Endothelial cell of umbilical vein (primary cell): ENCODE measurements at regions of chr12 and their contacts with region 1.

Region 1: GRCh38 chr12:116150001-116150400 is 127.5 kb downstream of the MED13L start:
- DNase-seq: peak; percentile 56
- H3K4me3 ChIP-seq: no peak overlapping the region
- H3K27ac ChIP-seq: no peak overlapping the region
- H3K4me1 ChIP-seq: peaks cover 21% of the 10 kb centered on the region
- H3K27me3 ChIP-seq: no peaks in the 10 kb centered on the region
- CTCF ChIP-seq: no peak
- POLR2A ChIP-seq: no peak

Region 2: GRCh38 chr12:115946867-115947696 is 202.9 kb before region 1 on chr12:
- CTCF ChIA-PET with region 1: no interaction called
- POLR2A ChIA-PET with region 1: no interaction called
- dilution Hi-C with region 1: no loop called
- intact Hi-C with region 1: no loop called
- DNase-seq: no peak
- H3K4me3 ChIP-seq: no peak overlapping the region
- H3K27ac ChIP-seq: no peak overlapping the region
- H3K4me1 ChIP-seq: no peaks in the 10 kb centered on the region
- H3K27me3 ChIP-seq: no peaks in the 10 kb centered on the region
- CTCF ChIP-seq: peak; percentile 31 to 39
- POLR2A ChIP-seq: no peak

Region 3: GRCh38 chr12:116101991-116102390 is 48.0 kb before region 1 on chr12:
- CTCF ChIA-PET with region 1: no interaction called
- POLR2A ChIA-PET with region 1: no interaction called
- dilution Hi-C with region 1: no loop called
- intact Hi-C with region 1: no loop called
- DNase-seq: no peak
- H3K4me3 ChIP-seq: no peak overlapping the region
- H3K27ac ChIP-seq: no peak overlapping the region
- H3K4me1 ChIP-seq: peaks cover 3% of the 10 kb centered on the region
- H3K27me3 ChIP-seq: no peaks in the 10 kb centered on the region
- CTCF ChIP-seq: no peak
- POLR2A ChIP-seq: no peak

Region 4: GRCh38 chr12:116161588-116161987 is 11.6 kb after region 1 on chr12:
- CTCF ChIA-PET with region 1: interaction called, 10 read pairs
- POLR2A ChIA-PET with region 1: interaction called, 6 read pairs
- dilution Hi-C with region 1: no loop called
- intact Hi-C with region 1: loop called (anchors 2 kb)
- DNase-seq: no peak
- H3K4me3 ChIP-seq: no peak overlapping the region
- H3K27ac ChIP-seq: no peak overlapping the region
- H3K4me1 ChIP-seq: peaks cover 9% of the 10 kb centered on the region
- H3K27me3 ChIP-seq: no peaks in the 10 kb centered on the region
- CTCF ChIP-seq: no peak
- POLR2A ChIP-seq: no peak